Endothelial cell of umbilical vein (primary cell): ENCODE measurements at regions of chr3 and their contacts with region 1.

Region 1: GRCh38 chr3:157532529-157533297 is 29.5 kb upstream of the VEPH1 start:
- DNase-seq: peak; percentile 94
- H3K4me3 ChIP-seq: peak overlapping the region; percentile 40 to 96 (median 86)
- H3K27ac ChIP-seq: peak overlapping the region; percentile 100
- H3K4me1 ChIP-seq: peaks cover 67% of the 10 kb centered on the region
- H3K27me3 ChIP-seq: no peaks in the 10 kb centered on the region
- CTCF ChIP-seq: peak; percentile 61 to 68
- POLR2A ChIP-seq: peak; percentile 17

Region 2: DNA sequence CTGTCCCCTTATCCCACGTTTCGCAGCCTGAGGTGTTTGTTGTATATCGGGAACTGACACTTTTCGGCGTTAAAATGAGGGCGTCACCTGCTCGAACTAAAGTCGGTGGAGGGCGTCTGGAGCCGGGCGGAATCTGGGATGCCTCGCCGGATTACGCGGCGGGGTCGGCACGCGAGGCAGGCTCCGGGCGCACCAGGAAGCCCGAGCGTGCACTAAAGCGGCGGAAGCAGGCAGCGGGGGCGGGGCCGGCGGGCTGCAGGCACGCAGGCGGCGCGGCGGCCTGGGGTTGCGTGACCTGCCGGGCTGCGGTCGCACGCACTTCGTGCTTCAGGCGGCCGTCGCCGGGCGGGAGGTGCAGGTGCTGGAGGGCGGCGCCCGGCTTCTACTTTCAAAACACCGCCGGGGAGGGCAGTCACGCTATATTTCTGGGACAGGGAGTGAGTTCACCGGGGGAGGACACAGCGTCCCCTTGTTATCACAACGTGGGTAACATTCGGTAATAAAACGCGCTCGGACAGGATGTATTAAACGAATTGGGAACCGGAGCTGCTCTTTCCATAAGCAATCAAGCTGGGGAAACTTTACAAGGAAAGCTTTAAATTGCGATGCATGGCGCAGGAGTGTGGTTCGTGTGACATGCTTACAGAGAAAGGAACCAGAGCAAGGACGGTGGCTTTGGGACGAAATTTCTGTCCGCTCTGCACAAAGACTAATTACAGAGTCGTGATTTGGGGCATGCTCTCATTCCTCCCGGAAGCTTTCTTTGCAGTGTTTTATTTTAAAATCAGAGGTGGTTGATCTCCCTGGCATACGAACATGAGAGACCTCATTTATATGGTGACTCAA is 715.7 kb before region 1 on chr3:
- CTCF ChIA-PET with region 1: no interaction called
- POLR2A ChIA-PET with region 1: no interaction called
- dilution Hi-C with region 1: no loop called
- intact Hi-C with region 1: loop called (anchors 5 kb)
- DNase-seq: peak; percentile 86
- H3K4me3 ChIP-seq: peak overlapping the region in 2 of 3 experiments; percentile 37
- H3K27ac ChIP-seq: peak overlapping the region; percentile 91
- H3K4me1 ChIP-seq: peaks cover 56% of the 10 kb centered on the region
- H3K27me3 ChIP-seq: no peaks in the 10 kb centered on the region
- CTCF ChIP-seq: no peak
- POLR2A ChIP-seq: no peak

Region 3: GRCh38 chr3:156826896-156827882 is 705.5 kb before region 1 on chr3:
- CTCF ChIA-PET with region 1: no interaction called
- POLR2A ChIA-PET with region 1: no interaction called
- dilution Hi-C with region 1: no loop called
- intact Hi-C with region 1: no loop called
- DNase-seq: no peak
- H3K4me3 ChIP-seq: peak overlapping the region in 2 of 3 experiments; percentile 55 to 90
- H3K27ac ChIP-seq: peak overlapping the region; percentile 100
- H3K4me1 ChIP-seq: peaks cover 20% of the 10 kb centered on the region
- H3K27me3 ChIP-seq: no peaks in the 10 kb centered on the region
- CTCF ChIP-seq: no peak
- POLR2A ChIP-seq: no peak

Region 4: GRCh38 chr3:157282261-157283191 is 250.2 kb before region 1 on chr3:
- CTCF ChIA-PET with region 1: no interaction called
- POLR2A ChIA-PET with region 1: no interaction called
- dilution Hi-C with region 1: no loop called
- intact Hi-C with region 1: loop called (anchors 5 kb)
- DNase-seq: peak; percentile 94
- H3K4me3 ChIP-seq: peak overlapping the region in 1 of 3 experiments; percentile 41
- H3K27ac ChIP-seq: peak overlapping the region; percentile 74
- H3K4me1 ChIP-seq: peaks cover 64% of the 10 kb centered on the region
- H3K27me3 ChIP-seq: no peaks in the 10 kb centered on the region
- CTCF ChIP-seq: no peak
- POLR2A ChIP-seq: no peak

Region 5: DNA sequence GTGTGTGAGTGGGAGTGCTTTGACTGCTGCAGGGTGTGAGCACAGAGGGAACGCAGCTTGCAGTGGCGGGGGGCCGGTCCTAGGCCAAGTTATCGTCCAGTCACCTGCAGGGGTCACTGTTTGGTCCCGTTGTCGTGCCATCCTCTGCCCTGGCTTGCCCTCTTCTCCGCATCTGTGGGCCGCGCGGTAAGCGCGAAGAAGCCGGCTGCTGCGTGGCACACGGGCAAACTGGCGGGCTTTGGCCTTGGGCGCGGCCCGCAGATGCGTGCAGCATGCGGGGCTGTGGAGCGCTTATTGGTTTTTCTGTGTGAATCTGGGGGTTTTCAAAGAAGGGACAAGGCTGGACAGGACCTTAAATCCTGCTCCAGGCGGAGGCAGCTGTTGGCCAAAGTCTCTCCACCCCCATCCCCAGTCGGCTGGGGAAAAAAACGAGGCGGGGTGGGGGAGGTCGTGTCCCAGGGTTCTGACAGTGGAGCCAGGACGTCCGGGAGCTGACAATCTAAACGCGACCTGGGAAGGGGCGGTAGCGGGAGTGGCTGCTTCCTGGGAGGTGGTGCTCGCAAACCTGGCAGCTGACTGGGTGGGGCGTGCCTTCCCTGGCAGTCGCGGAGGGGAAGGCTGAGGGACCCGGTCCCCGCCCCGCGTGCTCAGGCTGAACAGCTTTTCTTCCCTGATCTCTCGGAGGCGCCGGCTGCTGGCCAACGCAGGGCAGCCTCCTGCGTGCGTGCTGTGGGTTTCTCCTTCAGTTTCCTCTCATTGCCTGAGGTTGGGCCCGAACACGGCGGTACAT is 10.2 kb after region 1 on chr3:
- CTCF ChIA-PET with region 1: interaction called, 90 read pairs
- POLR2A ChIA-PET with region 1: interaction called, 3 read pairs
- dilution Hi-C with region 1: no loop called
- intact Hi-C with region 1: loop called (anchors 1 kb)
- DNase-seq: peak; percentile 61
- H3K4me3 ChIP-seq: peak overlapping the region; percentile 31 to 60 (median 42)
- H3K27ac ChIP-seq: no peak overlapping the region
- H3K4me1 ChIP-seq: peaks cover 4% of the 10 kb centered on the region
- H3K27me3 ChIP-seq: no peaks in the 10 kb centered on the region
- CTCF ChIP-seq: peak; percentile 32 to 62
- POLR2A ChIP-seq: peak; percentile 34

Region 6: DNA sequence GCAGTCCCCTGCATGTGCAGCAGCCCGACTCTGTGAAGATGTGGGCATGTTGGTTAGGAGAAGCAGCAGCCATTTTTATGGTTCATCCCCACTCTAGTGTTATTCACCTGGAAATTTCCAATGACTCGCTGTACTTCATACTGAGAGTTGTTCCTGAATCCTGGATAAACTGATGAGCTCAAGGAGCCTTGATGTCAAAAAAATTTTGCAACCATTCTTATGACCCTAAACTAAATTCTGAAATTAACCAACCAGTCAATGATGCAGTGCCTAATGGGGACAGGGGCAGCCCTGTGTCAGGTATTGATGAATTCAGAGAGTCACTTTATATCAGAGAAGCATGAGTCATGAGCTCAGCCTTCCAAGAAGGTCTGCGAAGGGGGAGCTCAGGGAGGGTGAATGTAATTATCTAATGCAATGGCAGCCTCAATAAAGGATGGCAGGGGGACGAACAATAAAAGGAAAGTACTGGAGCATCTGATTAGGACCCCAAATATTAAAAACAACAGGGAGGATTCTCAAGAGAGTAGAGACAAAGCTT is 78.9 kb after region 1 on chr3:
- CTCF ChIA-PET with region 1: interaction called, 45 read pairs
- POLR2A ChIA-PET with region 1: no interaction called
- dilution Hi-C with region 1: no loop called
- intact Hi-C with region 1: loop called (anchors 2 kb)
- DNase-seq: no peak
- H3K4me3 ChIP-seq: no peak overlapping the region
- H3K27ac ChIP-seq: no peak overlapping the region
- H3K4me1 ChIP-seq: no peaks in the 10 kb centered on the region
- H3K27me3 ChIP-seq: peaks cover 0 to 6% of the 10 kb centered on the region in 2 experiments
- CTCF ChIP-seq: no peak
- POLR2A ChIP-seq: no peak

Region 7: DNA sequence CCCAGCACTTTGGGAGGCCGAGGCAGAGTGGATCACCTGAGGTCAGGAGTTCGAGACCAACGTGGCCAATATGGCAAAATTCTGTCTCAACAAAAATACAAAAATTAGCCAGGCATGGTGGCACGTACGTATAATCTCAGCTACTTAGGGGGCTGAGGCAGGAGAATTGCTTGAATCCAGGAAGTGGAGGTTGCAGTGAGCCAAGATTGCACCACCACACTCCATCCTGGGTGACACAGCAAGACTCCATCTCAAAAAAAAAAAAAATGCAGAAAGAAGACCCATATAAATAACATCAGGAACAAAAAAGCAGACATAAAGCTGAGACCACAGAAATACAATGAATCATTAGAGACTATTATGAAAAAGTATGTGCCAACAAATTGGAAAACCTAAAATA is 205.7 kb after region 1 on chr3:
- CTCF ChIA-PET with region 1: no interaction called
- POLR2A ChIA-PET with region 1: no interaction called
- dilution Hi-C with region 1: no loop called
- intact Hi-C with region 1: no loop called
- DNase-seq: no peak
- H3K4me3 ChIP-seq: no peak overlapping the region
- H3K27ac ChIP-seq: no peak overlapping the region
- H3K4me1 ChIP-seq: no peaks in the 10 kb centered on the region
- H3K27me3 ChIP-seq: no peaks in the 10 kb centered on the region
- CTCF ChIP-seq: no peak
- POLR2A ChIP-seq: no peak

Region 8: DNA sequence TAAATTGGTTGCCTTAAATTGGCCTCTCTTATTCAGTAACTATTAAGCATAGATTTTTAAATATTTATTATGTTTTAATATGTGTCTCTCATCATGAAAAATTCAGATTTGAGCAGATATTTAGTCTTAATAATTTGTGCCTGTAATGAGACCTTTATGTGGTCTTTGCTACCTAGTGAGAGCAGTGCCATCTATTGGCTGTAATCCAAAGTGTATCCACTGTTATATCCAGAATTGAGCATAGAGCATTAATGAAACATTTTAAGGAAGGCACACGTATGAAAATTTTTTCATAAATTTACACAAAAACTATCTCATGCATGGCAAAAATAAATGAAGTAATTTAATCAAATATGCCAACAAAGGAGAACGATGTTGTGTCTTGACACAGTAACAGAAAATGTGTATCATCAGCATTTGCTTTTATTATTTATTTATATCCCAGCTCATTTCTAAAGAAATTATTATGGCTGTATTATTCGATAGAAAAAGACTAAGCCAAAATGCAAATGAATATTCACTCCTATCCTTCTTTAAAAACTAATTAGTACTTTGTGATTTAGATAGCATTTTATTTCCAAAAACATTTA is 780.7 kb after region 1 on chr3:
- CTCF ChIA-PET with region 1: no interaction called
- POLR2A ChIA-PET with region 1: no interaction called
- dilution Hi-C with region 1: no loop called
- intact Hi-C with region 1: loop called (anchors 1 kb)
- DNase-seq: peak; percentile 43
- H3K4me3 ChIP-seq: no peak overlapping the region
- H3K27ac ChIP-seq: no peak overlapping the region
- H3K4me1 ChIP-seq: no peaks in the 10 kb centered on the region
- H3K27me3 ChIP-seq: no peaks in the 10 kb centered on the region
- CTCF ChIP-seq: peak in 1 of 2 donors; percentile 35
- POLR2A ChIP-seq: no peak